H1 (cell line): ENCODE measurements at regions of chr2 and their contacts with region 1.

Region 1: DNA sequence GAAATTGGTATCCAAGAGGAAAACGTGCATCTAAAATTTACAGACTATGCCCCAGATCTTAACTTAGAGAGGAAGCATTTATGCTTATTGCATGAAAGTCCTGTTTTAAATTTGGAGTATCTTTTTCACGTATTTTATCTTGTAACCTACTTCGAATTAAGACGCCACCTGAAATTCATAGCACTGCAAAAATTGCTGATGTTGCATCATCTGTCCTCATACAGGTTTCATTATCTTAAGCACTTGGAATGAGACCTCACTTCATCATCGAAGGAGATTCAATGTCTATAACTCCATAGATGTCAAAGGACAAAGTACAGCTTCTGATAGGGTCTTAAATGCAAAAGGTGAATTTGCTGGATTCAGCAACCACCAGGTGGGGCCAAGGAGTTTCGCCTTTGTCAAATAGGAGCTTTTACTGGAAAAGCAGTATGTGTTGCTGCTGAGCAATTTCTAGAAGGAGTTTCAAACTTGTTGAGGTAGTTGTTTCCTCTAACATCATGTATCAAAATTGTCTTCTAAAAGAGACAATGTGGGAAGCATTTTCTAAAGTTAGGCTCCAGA is 106.4 kb upstream of the CCDC85A start:
- DNase-seq: peak; percentile 34 to 65
- H3K4me3 ChIP-seq: no peak overlapping the region
- H3K27ac ChIP-seq: no peak overlapping the region
- H3K4me1 ChIP-seq: no peaks in the 10 kb centered on the region
- H3K27me3 ChIP-seq: no peaks in the 10 kb centered on the region
- CTCF ChIP-seq: peak in 2 of 3 experiments; percentile 63 to 77; a peak in 3 of 4 replicates
- EP300 ChIP-seq: no peak
- POLR2A ChIP-seq: no peak
- RAD21 ChIP-seq: peak; percentile 72 to 73

Region 2: DNA sequence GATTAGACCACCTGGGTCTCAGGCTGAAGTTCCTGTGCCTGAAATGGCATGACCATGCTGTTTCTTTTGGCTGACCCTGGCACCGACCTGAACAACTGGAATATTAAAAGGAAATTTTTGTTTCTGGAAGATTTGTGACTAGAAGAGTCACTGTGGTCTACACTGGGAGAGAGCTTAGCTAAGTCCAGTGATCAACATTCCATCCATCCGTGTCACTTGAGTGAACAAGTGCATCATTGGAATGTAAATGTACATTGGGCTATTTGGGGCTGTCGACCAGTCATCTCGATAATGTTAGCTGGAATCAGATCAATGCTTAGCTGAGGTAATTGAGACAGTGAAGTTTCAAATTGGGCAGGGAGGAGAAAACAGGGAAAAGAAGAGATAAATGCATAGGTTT is 11.0 kb after region 1 on chr2:
- CTCF ChIA-PET with region 1: interaction called, 19 read pairs
- POLR2A ChIA-PET with region 1: no interaction called
- DNase-seq: no peak
- H3K4me3 ChIP-seq: no peak overlapping the region
- H3K27ac ChIP-seq: no peak overlapping the region
- H3K4me1 ChIP-seq: no peaks in the 10 kb centered on the region
- H3K27me3 ChIP-seq: no peaks in the 10 kb centered on the region
- CTCF ChIP-seq: no peak
- EP300 ChIP-seq: no peak
- POLR2A ChIP-seq: no peak
- RAD21 ChIP-seq: no peak